Astrocyte of the cerebellum (primary cell): ENCODE measurements at regions of chr3 and their contacts with region 1.

Region 1: DNA sequence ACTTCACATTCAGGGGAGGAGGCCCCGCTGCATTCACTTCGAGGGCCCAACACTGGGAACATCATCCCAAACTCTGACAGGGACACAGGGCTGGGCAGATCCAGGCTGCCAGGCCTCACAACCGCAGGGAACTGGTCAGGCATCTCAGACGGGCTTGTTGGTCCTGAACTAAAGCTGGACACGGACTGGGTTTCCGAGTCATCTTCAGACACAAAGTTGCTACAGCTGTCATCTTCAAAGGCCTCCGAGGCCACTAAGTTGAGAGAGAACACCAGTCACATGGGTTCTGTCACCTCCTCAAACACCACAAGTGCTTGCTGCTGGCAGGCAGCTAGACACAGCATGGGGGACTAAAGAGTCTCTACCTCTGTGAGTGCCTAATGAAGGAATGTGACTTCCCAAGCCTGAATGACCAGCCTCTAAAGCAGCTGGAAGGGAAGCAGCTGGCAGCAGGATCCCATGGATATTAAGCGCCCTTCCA is 50.9 kb downstream of the CAPN7 start:
- DNase-seq: no peak
- H3K4me3 ChIP-seq: no peak overlapping the region
- CTCF ChIP-seq: no peak

Region 2: DNA sequence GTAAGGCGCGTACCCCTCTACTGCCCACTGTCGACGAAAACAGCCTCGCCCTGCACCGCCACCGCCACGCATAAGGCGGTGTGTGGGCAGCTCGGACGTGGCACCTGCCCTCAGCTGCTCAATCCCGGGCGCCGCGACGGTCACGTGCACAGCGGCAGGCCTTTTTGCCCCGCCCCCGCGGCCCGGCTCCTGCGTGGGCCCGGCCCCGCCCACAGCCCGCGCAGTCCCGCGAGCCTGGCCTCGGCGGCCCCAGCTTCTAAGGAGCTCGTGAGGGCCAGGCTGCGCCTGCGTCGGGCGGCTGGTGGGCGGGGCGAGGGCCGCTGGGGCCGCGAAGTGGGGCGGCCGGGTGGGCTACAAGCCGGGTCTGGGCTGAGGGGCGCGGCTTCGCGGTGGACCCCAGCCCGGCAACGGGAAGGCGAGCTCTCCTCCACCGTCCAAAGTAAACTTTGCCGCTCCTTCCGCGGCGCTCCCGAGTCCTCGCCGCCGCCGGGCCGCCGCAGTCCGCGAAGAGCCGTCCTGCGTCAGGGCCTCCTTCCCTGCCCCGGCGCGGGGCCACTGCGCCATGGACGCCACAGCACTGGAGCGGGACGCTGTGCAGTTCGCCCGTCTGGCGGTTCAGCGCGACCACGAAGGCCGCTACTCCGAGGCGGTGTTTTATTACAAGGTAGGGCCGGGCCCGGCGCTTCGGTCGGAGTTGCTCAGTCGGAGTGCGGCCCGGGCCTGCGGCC is 50.8 kb before region 1 on chr3 and contains the start of gene CAPN7:
- in situ Hi-C with region 1: loop called (anchors 5 kb)
- DNase-seq: peak; percentile 72
- H3K4me3 ChIP-seq: peak within 1 kb of the TSS; percentile 88
- CTCF ChIP-seq: peak; percentile 49

Region 3: GRCh38 chr3:15217841-15218267 is 39.0 kb before region 1 on chr3:
- in situ Hi-C with region 1: no loop called
- DNase-seq: no peak
- H3K4me3 ChIP-seq: no peak overlapping the region
- CTCF ChIP-seq: no peak

Region 4: GRCh38 chr3:15405448-15406050 is 148.6 kb after region 1 on chr3:
- in situ Hi-C with region 1: loop called (anchors 5 kb)
- DNase-seq: peak; percentile 66
- H3K4me3 ChIP-seq: no peak overlapping the region
- CTCF ChIP-seq: peak; percentile 57